Vagina (tissue), 2 donors: ENCODE measurements at regions of chr2 and their contacts with region 1.

Region 1: DNA sequence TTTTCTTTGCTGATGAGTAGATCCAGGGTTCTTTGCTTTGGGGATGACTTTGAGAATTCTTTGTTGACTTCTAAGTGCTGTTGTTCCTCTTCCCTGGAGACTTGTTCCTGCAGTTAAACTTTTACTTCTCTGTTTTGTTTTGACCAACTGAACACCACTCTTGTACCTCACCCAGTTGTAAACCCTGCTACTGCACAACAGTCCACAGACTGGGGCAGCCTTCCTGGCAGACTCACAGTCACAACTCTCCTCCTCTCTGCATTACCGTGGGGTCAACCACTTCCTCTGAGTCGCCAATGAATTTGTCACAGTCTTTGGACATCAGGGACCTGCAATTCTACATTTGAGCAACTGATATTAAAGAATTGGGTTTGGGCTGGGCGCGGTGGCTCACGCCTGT is 3.8 kb upstream of the SLC8A1 start:
- DNase-seq: no peak
- H3K4me3 ChIP-seq: no peak overlapping the region
- H3K27ac ChIP-seq: no peak overlapping the region
- H3K4me1 ChIP-seq: peaks cover 8% of the 10 kb centered on the region
- H3K27me3 ChIP-seq: no peaks in the 10 kb centered on the region
- CTCF ChIP-seq: no peak
- POLR2A ChIP-seq: no peak

Region 2: DNA sequence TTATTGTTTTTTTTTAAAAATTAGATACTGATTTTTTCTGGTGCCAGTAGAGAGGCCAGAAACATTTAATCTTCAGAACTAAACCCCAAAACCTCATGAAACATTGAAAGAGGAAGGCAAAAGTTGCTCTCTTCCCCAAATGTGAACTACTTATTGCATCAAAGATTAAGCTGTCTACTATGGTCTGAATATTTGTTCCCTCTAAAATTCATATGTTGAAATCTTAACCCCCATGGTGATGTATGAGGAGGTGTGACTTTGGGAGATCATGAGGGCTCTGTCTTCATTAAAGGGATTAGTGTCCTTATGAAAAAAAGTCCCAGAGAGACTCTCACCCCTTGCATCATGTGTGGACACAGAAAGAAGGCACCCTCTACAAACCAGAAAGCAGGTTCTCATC is 24.4 kb after region 1 on chr2:
- intact Hi-C with region 1: no loop called
- DNase-seq: no peak
- H3K4me3 ChIP-seq: no peak overlapping the region
- H3K27ac ChIP-seq: no peak overlapping the region
- H3K4me1 ChIP-seq: no peaks in the 10 kb centered on the region
- H3K27me3 ChIP-seq: no peaks in the 10 kb centered on the region
- CTCF ChIP-seq: no peak
- POLR2A ChIP-seq: no peak

Region 3: DNA sequence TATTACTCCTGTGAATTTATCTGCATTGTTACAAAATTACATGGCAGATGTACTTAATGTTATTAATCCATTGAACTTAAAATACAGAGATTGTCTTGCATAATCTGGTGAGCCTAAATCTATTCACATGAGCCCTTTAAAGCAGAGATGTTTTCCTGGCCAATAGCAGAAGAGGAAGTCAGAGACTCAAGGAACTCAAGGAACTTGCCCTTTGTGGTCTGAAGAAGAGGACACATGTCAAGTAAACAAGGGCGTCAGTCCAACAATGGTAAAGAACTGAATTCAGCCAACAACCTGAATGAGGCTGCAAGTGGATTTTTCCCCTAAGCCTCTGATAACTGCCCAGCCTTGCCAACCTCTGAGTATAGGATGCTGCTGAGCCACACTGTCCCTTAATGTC is 1235.9 kb after region 1 on chr2:
- intact Hi-C with region 1: loop called (anchors 5 kb)
- DNase-seq: no peak
- H3K4me3 ChIP-seq: no peak overlapping the region
- H3K27ac ChIP-seq: no peak overlapping the region
- H3K4me1 ChIP-seq: no peaks in the 10 kb centered on the region
- H3K27me3 ChIP-seq: no peaks in the 10 kb centered on the region
- CTCF ChIP-seq: no peak
- POLR2A ChIP-seq: no peak